AG04450 (cell line): ENCODE measurements at regions of chr12 and their contacts with region 1.

Region 1: GRCh38 chr12:118404876-118405521 is 28.6 kb downstream of the SUDS3 start:
- DNase-seq: peak; percentile 27
- H3K4me3 ChIP-seq: no peak overlapping the region
- H3K27ac ChIP-seq: no peak overlapping the region
- H3K27me3 ChIP-seq: no peaks in the 10 kb centered on the region
- CTCF ChIP-seq: peak; percentile 78

Region 2: DNA sequence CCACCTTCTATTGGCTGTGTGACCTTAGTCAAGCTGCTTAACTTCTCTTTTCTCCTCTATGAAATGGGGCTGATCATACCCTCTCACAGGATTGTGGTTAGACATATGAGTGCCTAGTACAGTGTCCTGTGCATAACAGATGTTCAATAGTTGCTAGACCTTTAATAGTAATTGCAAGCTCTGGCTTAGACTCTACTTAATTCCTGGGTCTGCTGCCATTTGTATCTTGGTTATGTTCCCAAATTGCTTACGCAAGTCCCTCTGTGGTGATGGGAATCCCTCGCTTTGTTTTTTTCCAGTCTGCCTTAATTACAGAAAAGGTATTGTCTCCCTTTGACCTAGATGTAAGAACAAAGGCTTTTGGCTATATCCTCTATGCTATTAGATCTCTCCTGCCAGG is 13.6 kb before region 1 on chr12:
- CTCF ChIA-PET with region 1: interaction called, 40 read pairs
- POLR2A ChIA-PET with region 1: no interaction called
- DNase-seq: no peak
- H3K4me3 ChIP-seq: no peak overlapping the region
- H3K27ac ChIP-seq: no peak overlapping the region
- H3K27me3 ChIP-seq: no peaks in the 10 kb centered on the region
- CTCF ChIP-seq: no peak

Region 3: GRCh38 chr12:118418385-118419057 is 13.5 kb after region 1 on chr12:
- CTCF ChIA-PET with region 1: interaction called, 15 read pairs
- POLR2A ChIA-PET with region 1: no interaction called
- DNase-seq: no peak
- H3K4me3 ChIP-seq: no peak overlapping the region
- H3K27ac ChIP-seq: no peak overlapping the region
- H3K27me3 ChIP-seq: no peaks in the 10 kb centered on the region
- CTCF ChIP-seq: no peak

Region 4: GRCh38 chr12:118427819-118428218 is 22.8 kb after region 1 on chr12:
- CTCF ChIA-PET with region 1: interaction called, 12 read pairs
- POLR2A ChIA-PET with region 1: no interaction called
- DNase-seq: no peak
- H3K4me3 ChIP-seq: no peak overlapping the region
- H3K27ac ChIP-seq: no peak overlapping the region
- H3K27me3 ChIP-seq: no peaks in the 10 kb centered on the region
- CTCF ChIP-seq: no peak

Region 5: DNA sequence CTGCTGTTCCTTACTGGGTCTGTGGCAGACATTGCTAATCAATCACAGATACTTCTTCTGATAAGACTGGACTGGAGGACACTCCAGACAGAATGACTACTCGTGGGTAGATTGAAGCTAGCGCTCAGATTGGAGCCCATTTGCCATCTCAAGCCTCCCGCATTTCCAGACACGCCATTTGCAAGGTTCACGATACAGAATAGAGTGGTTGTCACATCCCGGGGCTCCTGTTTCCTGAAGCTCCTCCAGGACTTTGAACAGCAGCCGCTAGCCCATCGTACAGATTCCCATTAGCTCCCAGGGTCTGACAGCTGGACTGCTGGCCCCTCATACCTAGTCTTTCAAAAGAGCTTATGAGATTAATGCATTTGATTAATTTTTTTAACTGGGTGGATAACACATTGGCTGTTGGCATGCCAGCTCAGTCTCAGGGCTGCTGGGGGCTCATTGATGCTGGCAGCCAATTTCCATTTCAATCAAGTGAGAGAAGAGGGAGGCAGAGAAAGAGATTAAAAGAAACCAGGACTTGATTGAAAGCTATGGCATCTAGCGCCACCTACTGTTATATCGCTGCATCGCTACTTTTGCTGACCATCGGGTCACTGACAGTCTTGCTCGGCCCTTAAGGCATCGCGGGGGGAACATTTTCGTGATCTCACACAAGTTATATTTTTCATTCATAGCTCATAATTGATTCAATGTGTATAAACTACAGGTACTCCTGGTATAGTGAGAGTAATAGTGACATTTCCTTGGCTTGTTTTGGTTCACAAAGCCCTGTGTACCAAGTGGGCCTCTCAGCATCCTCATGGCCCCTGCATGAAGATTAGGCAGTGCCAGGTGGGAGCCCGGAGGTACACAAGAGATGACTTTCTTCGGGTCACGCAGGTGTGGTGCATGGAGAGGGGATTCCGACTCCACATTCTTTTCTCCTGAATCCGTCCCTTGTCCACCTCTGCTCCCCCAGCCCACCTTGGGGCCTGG is 1008.1 kb after region 1 on chr12:
- CTCF ChIA-PET with region 1: interaction called, 45 read pairs
- POLR2A ChIA-PET with region 1: no interaction called
- DNase-seq: peak; percentile 24
- H3K4me3 ChIP-seq: no peak overlapping the region
- H3K27ac ChIP-seq: no peak overlapping the region
- H3K27me3 ChIP-seq: no peaks in the 10 kb centered on the region
- CTCF ChIP-seq: peak; percentile 81

Region 6: GRCh38 chr12:119544765-119545625 is 1140.0 kb after region 1 on chr12:
- CTCF ChIA-PET with region 1: interaction called, 49 read pairs
- POLR2A ChIA-PET with region 1: no interaction called
- DNase-seq: peak; percentile 49
- H3K4me3 ChIP-seq: no peak overlapping the region
- H3K27ac ChIP-seq: no peak overlapping the region
- H3K27me3 ChIP-seq: no peaks in the 10 kb centered on the region
- CTCF ChIP-seq: peak; percentile 87